K562 (cell line): ENCODE measurements at regions of chr6 and their contacts with region 1.

Region 1: DNA sequence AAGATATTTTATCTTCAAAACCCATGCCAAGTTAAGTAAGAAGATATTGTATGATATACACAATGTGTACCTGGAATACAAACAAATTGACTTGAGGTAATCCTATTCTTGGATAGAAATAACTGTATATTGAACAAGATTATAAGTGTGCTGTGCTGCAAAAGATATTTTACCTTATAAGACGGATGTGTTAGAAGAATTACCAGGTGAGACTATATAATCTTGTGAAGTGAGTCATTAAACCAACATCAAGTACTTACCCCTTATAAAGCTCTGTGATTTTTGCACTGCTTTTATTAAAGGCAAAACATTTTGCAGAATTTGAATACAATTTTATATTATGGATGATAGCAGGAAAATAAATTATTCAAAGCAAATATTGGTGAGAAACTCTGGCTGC is 570.0 kb downstream of the MMUT start:
- DNase-seq: no peak
- ATAC-seq: no peak
- H3K4me3 ChIP-seq: no peak overlapping the region
- H3K27ac ChIP-seq: no peak overlapping the region
- H3K4me1 ChIP-seq: no peaks in the 10 kb centered on the region
- H3K27me3 ChIP-seq: no peaks in the 10 kb centered on the region
- CTCF ChIP-seq: no peak
- EP300 ChIP-seq: no peak
- POLR2A ChIP-seq: no peak
- RAD21 ChIP-seq: no peak

Region 2: DNA sequence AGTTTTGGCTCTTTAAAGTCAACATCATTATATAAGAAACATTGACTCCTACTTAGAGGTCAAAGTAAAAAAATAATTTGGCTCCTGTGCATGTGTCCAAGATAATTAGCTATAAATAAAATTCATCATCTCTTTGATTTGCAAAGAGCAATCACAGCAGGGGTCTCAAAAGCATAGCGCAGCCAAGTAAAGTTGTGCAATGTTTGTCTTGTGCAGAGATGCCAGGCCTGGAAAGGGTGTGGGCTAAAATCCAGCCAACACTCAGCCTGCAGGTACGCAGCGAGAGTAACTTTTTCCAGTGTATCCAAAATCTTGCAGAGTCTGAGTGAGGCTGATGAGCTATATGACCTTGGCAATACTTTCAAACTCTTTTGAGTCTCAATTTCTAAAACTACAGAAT is 69.0 kb after region 1 on chr6:
- CTCF ChIA-PET with region 1: no interaction called
- POLR2A ChIA-PET with region 1: no interaction called
- in situ Hi-C with region 1: no loop called
- intact Hi-C with region 1: loop called (anchors 2 kb)
- DNase-seq: no peak
- ATAC-seq: no peak
- H3K4me3 ChIP-seq: no peak overlapping the region
- H3K27ac ChIP-seq: no peak overlapping the region
- H3K4me1 ChIP-seq: no peaks in the 10 kb centered on the region
- H3K27me3 ChIP-seq: no peaks in the 10 kb centered on the region
- CTCF ChIP-seq: no peak
- EP300 ChIP-seq: no peak
- POLR2A ChIP-seq: no peak
- RAD21 ChIP-seq: no peak